Activated CD4-positive, alpha-beta T cell treated with anti-CD3 and anti-CD28 coated beads for 36 hours (primary cell): ENCODE measurements at regions of chr9 and their contacts with region 1.

Region 1: GRCh38 chr9:33290247-33291030 is at the start of gene NFX1:
- DNase-seq: peak; percentile 99
- ATAC-seq: peak; percentile 89
- H3K4me3 Mint-ChIP-seq: peak within 1 kb of the TSS; percentile 90
- H3K27ac Mint-ChIP-seq: peak within 1 kb of the TSS; percentile 99
- H3K4me1 Mint-ChIP-seq: peaks cover 64% of the 10 kb centered on the region
- H3K27me3 Mint-ChIP-seq: no peaks in the 10 kb centered on the region
- total RNA-seq, gene NFX1: 31.2 to 33.7 TPM

Region 2: DNA sequence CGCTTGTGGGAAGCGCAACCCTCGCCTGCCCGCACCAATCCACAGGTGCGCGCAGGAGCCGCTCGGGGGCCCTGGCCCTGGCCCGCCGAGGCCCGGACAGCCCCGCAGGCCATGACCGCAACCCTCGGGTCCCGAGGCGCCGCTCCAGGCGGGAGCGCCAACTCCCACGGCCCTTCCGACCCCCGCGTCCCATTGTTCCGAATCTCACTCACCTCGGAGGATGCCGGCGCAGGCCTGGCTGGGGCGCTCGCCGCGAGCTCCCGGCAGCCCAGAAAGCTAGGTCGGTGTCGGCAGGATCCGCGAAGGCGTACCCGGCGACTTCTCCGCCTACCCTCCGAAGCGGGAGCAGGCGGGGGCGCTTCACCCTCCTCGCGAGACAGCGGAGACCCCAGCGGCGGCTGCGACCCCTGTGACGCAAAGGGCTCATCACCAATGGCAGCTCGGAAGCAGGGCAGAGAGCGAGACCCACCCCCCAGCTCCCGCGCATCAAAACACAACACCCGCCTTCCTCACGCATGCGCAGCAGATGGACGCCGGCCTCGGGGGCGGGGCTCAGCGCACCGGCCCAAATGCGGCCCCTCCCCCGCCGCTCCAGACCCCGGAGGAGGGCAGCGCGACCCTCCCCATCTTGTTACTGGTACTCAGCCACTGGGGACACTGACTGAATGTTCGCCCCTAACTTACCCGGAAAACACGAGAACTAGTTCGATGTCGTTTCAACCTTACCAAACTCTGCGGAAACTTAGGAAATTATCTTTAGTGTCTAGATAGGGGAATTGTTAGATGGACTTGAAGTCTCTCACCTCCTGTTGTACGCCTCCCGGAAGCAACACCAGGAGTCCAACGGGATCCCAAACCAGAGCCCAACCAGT is 739.6 kb before region 1 on chr9:
- CTCF ChIA-PET with region 1: no interaction called
- POLR2A ChIA-PET with region 1: no interaction called
- intact Hi-C with region 1: loop called in 1 of 2 experiments (anchors 1 kb)
- DNase-seq: peak; percentile 95
- ATAC-seq: peak; percentile 74
- H3K4me3 Mint-ChIP-seq: peak overlapping the region; percentile 96
- H3K27ac Mint-ChIP-seq: peak overlapping the region; percentile 99
- H3K4me1 Mint-ChIP-seq: peaks cover 47% of the 10 kb centered on the region
- H3K27me3 Mint-ChIP-seq: no peaks in the 10 kb centered on the region

Region 3: DNA sequence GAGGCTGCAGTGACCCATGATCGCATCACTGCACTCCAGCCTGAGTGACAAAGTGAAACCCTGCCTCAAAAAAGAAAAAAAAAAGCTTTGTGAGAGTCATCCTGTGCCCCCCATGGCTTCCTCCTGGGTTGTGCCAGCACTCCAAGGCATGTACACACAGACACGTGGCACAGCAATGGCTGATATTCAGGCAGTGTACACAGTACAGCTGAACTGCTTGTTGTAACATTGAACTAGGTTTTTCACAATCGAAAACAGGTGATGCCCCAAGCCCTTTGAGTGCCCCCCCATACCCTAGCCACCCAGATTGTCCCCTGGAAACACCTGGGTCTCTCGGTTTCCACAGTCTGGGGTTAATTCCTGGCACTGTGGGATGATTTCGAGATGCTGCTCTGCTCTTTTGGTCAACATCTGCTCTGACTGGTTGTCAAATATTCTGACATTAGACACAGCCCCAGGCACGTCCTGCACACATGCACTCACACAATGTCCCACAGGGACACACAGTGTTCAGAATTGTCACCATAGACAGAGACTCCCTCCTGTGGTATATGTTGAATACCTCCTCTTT is 41.3 kb before region 1 on chr9:
- CTCF ChIA-PET with region 1: no interaction called
- POLR2A ChIA-PET with region 1: no interaction called
- intact Hi-C with region 1: no loop called
- DNase-seq: no peak
- ATAC-seq: peak; percentile 36
- H3K4me3 Mint-ChIP-seq: no peak overlapping the region
- H3K27ac Mint-ChIP-seq: no peak overlapping the region
- H3K4me1 Mint-ChIP-seq: no peaks in the 10 kb centered on the region
- H3K27me3 Mint-ChIP-seq: no peaks in the 10 kb centered on the region

Region 4: GRCh38 chr9:33264473-33265177 is 25.8 kb before region 1 on chr9 and contains the starts of genes BAG1 and CHMP5:
- CTCF ChIA-PET with region 1: interaction called, 6 read pairs
- POLR2A ChIA-PET with region 1: interaction called, 3 read pairs
- intact Hi-C with region 1: loop called (anchors 1 kb)
- DNase-seq: peak; percentile 100
- ATAC-seq: peak; percentile 96
- H3K4me3 Mint-ChIP-seq: peak within 1 kb of the TSS; percentile 97
- H3K27ac Mint-ChIP-seq: peak within 1 kb of the TSS; percentile 99
- H3K4me1 Mint-ChIP-seq: peaks cover 51% of the 10 kb centered on the region
- H3K27me3 Mint-ChIP-seq: no peaks in the 10 kb centered on the region
- total RNA-seq, gene BAG1: 47.9 to 65.8 TPM
- total RNA-seq, gene CHMP5: 102 to 106 TPM

Region 5: DNA sequence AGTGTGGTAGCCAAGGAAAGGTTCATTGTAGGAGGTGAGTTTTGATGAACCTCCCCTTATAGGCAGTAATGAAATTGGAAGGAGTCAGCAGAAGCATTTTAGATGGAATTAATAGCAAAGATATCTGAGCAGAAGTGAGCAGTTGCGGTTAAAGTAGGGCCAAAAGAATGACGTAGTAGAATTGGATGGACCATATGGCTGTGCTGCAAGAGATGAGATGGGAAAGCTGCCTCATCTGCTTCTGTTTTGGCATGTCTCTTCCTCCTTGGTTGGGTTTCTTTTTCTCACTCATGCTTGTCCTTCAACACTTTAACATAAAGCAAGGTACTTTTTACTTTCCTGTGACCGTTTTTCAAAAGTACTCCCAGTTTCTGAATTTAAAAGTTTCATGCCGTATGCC is 56.1 kb after region 1 on chr9:
- CTCF ChIA-PET with region 1: no interaction called
- POLR2A ChIA-PET with region 1: no interaction called
- intact Hi-C with region 1: loop called in 1 of 2 experiments (anchors 2 kb)
- DNase-seq: no peak
- ATAC-seq: no peak
- H3K4me3 Mint-ChIP-seq: no peak overlapping the region
- H3K27ac Mint-ChIP-seq: no peak overlapping the region
- H3K4me1 Mint-ChIP-seq: peaks cover 9% of the 10 kb centered on the region
- H3K27me3 Mint-ChIP-seq: no peaks in the 10 kb centered on the region

Region 6: GRCh38 chr9:33466565-33467495 is 176.4 kb after region 1 on chr9:
- CTCF ChIA-PET with region 1: interaction called, 11 read pairs
- POLR2A ChIA-PET with region 1: no interaction called
- intact Hi-C with region 1: loop called in 1 of 2 experiments (anchors 1 kb)
- DNase-seq: peak; percentile 85
- ATAC-seq: peak; percentile 88
- H3K4me3 Mint-ChIP-seq: no peak overlapping the region
- H3K27ac Mint-ChIP-seq: no peak overlapping the region
- H3K4me1 Mint-ChIP-seq: peaks cover 10% of the 10 kb centered on the region
- H3K27me3 Mint-ChIP-seq: no peaks in the 10 kb centered on the region

Region 7: DNA sequence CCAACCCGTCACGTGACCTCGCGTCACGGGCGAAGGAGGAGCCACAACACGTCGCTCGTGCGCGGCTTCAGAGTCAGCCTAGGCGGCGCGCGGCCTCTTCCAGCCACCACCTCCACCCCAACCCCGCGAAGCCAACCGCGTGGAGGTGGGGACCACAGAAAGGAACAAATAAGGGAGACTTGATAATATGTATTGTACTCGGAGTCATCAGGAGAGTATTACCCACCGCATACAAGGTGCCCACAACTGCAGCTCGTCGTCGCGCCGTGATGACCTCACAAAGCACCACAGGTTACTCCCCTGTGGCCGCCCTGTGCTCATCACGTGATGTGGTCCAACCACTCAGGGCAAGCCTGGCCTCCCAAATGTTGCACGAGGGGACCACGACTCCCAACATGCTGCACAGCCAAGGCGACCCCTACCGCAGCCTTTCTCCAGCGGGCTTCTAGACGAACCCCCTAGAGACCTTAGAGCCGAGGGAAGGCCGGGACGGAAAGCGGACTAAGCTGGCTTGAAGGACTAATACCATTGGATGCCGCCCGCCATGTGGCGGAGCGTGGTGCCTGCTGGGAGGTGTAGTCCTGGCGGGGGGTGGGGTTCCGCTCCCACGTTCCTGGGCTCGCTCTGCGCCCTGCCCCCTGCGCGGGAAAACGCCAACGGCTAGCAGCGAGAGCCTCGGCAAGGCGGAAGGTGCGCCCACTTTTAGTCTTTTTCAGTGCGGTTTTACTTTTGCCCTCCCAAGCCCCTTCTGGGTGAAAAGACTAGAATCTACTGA is 758.7 kb after region 1 on chr9:
- CTCF ChIA-PET with region 1: no interaction called
- POLR2A ChIA-PET with region 1: no interaction called
- intact Hi-C with region 1: loop called in 1 of 2 experiments (anchors 1 kb)
- DNase-seq: peak; percentile 98
- ATAC-seq: peak; percentile 84
- H3K4me3 Mint-ChIP-seq: peak overlapping the region; percentile 90
- H3K27ac Mint-ChIP-seq: peak overlapping the region; percentile 99
- H3K4me1 Mint-ChIP-seq: peaks cover 38% of the 10 kb centered on the region
- H3K27me3 Mint-ChIP-seq: no peaks in the 10 kb centered on the region